ENCODE measurements at regions of chr16 and their contacts with region 1.

Region 1: DNA sequence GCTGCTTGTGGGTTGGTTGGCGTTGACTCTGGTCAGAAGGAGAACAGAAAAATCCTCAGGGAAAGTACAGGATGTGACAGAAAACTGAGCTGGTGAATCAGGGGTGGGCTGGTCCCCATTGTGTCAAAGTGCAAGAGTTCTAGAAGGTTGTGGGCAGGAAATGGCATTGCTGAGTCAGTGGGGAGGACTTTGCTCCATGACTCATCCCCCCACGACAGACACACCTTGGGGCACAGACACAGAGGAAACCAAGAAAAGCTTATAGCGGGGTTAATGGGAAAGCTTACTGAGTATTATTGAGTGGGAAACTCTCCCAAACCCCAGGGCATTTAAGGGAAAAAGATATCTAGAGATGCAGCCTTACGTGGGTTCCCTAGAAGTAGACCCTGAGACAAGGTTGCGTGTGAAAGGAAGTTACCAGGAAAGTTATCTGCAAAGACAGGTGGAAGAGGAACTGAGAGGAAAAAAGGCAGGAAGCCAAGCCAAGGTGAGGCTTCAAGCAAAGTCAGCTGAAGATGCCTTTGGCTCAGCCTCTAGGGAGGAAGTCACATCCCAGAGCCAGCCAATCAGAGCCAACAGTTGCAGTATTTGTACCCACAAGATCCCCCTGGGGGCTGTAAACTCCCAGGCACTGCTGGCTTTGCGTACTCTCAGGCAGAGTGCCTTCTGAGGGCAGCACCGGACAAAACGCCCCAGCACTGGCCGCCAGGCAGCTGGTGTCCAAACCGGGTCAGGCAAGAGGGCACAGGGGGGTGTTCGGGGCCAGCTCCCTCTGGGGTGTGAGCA is 86.4 kb downstream of the FOXL1 start:
- DNase-seq: no peak
- ATAC-seq: peak in 2 of 8 donors; percentile 35 to 61
- H3K4me3 ChIP-seq: no peak overlapping the region
- H3K27ac ChIP-seq: peak overlapping the region in 6 of 10 donors; percentile 42 to 78 (median 52)
- H3K4me1 ChIP-seq: peaks cover 0 to 49% (median 25%) of the 10 kb centered on the region in 9 donors
- H3K27me3 ChIP-seq: peaks cover 0 to 38% (median 13%) of the 10 kb centered on the region in 7 donors
- CTCF ChIP-seq: no peak

Region 2: DNA sequence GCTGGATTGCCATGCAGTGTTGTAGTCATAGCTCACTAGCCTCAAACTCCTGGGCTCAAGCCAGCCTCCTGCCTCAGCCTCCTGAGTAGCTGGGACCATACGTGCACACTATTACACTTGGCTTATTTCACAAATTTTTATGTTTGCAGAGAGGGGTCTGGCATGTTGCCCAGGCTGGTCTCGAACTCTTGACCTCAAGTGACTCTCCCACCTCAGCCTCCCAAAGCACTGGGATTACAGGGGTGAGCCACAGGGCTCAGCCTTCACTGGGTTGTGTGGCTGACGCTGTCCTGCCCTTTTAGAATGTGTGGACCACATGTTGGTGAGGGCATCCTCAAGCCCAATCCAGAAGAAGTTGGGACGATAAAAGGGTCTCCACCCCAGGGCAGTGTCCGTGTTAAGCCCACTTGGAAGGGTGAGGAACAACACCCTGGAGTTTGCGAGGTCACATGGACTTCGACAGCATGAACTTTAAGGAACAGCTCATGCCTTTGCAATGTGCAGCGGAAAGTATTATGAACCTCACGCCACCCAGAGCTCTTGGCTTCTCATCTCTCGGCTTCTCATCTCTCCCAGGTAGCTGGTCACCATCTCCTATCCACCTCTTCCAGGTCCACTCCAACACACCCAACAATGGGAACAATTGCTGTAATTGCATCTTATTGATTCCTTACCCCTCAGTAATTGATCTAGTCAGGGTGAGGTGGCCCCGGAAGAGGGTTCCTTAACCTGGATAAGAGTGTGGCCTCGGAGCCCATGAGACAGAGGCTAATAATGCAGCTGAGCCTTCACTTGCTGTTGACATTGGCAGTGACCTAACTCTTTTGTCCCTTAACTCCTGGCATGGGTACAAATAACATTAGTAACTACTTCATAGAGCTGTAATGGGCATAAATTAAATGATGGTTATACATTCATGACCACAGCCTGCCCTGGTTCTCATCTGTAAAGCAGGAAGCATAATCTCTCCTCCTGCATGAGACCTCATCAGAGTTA is 79.7 kb before region 1 on chr16:
- intact Hi-C with region 1: loop called in 1 of 10 experiments (anchors 5 kb)
- DNase-seq: no peak
- ATAC-seq: peak in 1 of 8 donors; percentile 26
- H3K4me3 ChIP-seq: no peak overlapping the region
- H3K27ac ChIP-seq: peak overlapping the region in 7 of 10 donors; percentile 26 to 70 (median 58)
- H3K4me1 ChIP-seq: peaks cover 0 to 46% (median 0%) of the 10 kb centered on the region in 9 donors
- H3K27me3 ChIP-seq: peaks cover 0 to 43% (median 35%) of the 10 kb centered on the region in 7 donors
- CTCF ChIP-seq: no peak

Region 3: GRCh38 chr16:86618811-86619794 is 45.6 kb before region 1 on chr16:
- intact Hi-C with region 1: loop called in 1 of 10 experiments (anchors 5 kb)
- DNase-seq: no peak
- ATAC-seq: peak in 7 of 8 donors; percentile 34 to 74 (median 58)
- H3K4me3 ChIP-seq: peak overlapping the region in 8 of 10 donors; percentile 5 to 44 (median 38)
- H3K27ac ChIP-seq: peak overlapping the region in 2 of 10 donors; percentile 2 to 22
- H3K4me1 ChIP-seq: no peaks in the 10 kb centered on the region
- H3K27me3 ChIP-seq: peaks cover 0 to 15% (median 0%) of the 10 kb centered on the region in 7 donors
- CTCF ChIP-seq: no peak

Measured in heart right ventricle (tissue), 16 donors.